ENCODE measurements at regions of chr15 and their contacts with region 1.

Region 1: DNA sequence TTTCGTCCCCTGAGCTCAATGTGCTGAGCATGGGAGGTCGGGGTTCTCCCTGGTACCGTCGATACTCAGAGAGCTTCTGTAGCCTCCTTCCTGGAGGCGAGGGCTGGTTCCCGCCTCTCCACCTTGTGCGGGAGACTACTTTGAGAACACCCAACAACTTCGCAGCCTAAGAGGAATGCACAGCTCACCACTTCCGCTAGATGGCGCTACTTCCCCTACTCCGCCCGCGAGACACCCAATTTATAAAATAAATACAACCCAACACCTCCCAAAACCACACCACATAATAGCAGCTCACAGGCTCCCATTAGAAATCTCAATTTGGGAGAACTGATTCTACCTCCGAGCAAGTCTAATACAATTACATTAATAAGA is 1.2 kb downstream of the RGMA start:
- H3K4me3 Mint-ChIP-seq: peak overlapping the region; percentile 76
- H3K27ac Mint-ChIP-seq: no peak overlapping the region
- H3K4me1 Mint-ChIP-seq: peaks cover 17% of the 10 kb centered on the region
- H3K27me3 Mint-ChIP-seq: peaks cover 59% of the 10 kb centered on the region

Region 2: GRCh38 chr15:92979011-92979701 is 108.7 kb before region 1 on chr15:
- intact Hi-C with region 1: no loop called
- H3K4me3 Mint-ChIP-seq: no peak overlapping the region
- H3K27ac Mint-ChIP-seq: no peak overlapping the region
- H3K4me1 Mint-ChIP-seq: peaks cover 8% of the 10 kb centered on the region
- H3K27me3 Mint-ChIP-seq: no peaks in the 10 kb centered on the region

Region 3: GRCh38 chr15:93052090-93052879 is 35.5 kb before region 1 on chr15:
- intact Hi-C with region 1: no loop called
- H3K4me3 Mint-ChIP-seq: no peak overlapping the region
- H3K27ac Mint-ChIP-seq: no peak overlapping the region
- H3K4me1 Mint-ChIP-seq: peaks cover 22% of the 10 kb centered on the region
- H3K27me3 Mint-ChIP-seq: peaks cover 25% of the 10 kb centered on the region

Region 4: DNA sequence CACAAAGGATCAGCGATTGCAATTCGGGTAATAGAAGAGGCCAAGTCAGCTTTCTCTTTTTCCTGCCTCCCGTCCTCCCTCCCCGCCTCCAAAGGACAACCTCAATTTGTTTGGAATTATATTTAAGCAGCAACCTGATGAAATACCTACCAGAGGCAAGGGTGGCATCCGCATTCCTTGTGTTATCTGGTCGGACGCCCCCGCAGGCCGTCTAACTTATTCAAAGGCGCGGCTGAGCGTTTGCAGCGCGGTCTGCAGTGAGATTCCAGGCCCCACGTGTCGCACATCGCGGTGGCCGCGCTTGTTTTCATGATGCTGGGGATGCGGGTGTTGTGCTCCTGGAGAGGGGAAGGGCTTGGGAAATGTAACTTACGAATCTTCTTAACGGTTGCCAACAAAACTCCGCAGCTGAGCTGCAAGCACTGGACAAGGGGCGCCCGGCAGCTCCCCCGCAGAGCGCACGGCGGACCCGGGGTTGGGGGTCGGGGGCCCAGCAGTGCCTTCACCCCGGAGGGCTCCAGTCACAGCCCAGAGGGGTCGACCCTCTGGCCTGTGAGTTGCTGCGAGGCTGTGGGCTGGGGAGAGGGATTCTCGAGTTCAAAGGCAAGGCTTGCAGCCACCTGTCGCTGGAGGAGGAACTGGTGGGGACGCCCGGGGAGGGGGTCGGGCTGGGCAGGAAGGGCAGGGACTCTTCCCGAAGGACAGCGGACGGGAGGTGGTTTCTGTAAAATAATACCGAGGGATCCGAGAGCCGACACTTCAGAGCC is 21.7 kb after region 1 on chr15:
- intact Hi-C with region 1: no loop called
- H3K4me3 Mint-ChIP-seq: no peak overlapping the region
- H3K27ac Mint-ChIP-seq: no peak overlapping the region
- H3K4me1 Mint-ChIP-seq: peaks cover 6% of the 10 kb centered on the region
- H3K27me3 Mint-ChIP-seq: peaks cover 49% of the 10 kb centered on the region

Region 5: DNA sequence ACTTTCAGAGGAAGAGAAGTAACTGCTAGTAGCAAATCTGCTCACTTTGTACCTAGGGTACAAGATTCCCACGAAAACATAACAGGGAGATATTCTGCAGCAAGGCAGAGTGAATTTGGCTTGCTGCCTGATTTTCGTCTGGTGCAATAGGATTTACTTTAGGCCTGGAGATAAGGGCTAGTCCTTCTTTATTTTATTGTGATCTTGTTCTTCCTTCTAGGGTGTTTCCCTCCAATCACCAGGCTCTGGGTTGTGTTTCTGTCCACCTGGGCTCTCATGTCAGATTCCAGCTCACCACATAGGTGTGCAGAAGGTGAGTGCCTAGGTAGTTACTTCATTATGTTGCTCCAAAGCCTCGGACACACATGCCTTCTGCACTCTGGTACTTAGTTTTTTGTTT is 213.0 kb after region 1 on chr15:
- intact Hi-C with region 1: loop called (anchors 1 kb)
- H3K4me3 Mint-ChIP-seq: no peak overlapping the region
- H3K27ac Mint-ChIP-seq: no peak overlapping the region
- H3K4me1 Mint-ChIP-seq: peaks cover 8% of the 10 kb centered on the region
- H3K27me3 Mint-ChIP-seq: peaks cover 12% of the 10 kb centered on the region

Region 6: GRCh38 chr15:93974804-93975481 is 887.1 kb after region 1 on chr15:
- intact Hi-C with region 1: loop called (anchors 10 kb)
- H3K4me3 Mint-ChIP-seq: no peak overlapping the region
- H3K27ac Mint-ChIP-seq: no peak overlapping the region
- H3K4me1 Mint-ChIP-seq: no peaks in the 10 kb centered on the region
- H3K27me3 Mint-ChIP-seq: no peaks in the 10 kb centered on the region

Measured in dendritic cell treated with granulocyte-macrophage colony-stimulating factor and Interleukin-4, amounts not matched to agents 40 ng/mL and 50 ng/mL, for 4 days (primary cell).